Aorta (tissue), 5 donors: ENCODE measurements at regions of chrX and their contacts with region 1.

Region 1: DNA sequence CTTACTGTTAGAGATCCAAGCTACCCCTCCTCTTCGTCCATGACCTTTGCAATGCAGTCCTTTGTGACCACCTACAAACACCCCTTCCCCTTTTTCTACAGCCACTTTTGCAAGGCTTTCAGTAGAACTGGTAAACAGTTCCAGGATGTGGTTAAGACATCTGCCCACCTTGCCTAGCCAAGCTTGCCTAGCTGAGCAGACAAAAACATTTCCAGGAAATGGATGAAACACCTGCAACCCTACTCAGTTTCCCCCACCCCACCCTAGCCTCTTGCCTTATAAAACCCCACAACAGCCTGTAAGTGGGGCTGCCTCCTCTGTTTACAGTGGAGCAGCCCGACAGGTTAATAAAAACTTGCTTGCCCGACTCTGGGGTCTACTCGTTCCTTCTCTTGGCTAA is 133.8 kb downstream of the ZC4H2 start:
- DNase-seq: no peak
- ATAC-seq: no peak
- H3K4me3 ChIP-seq: no peak overlapping the region
- H3K27ac ChIP-seq: no peak overlapping the region
- H3K4me1 ChIP-seq: no peaks in the 10 kb centered on the region
- H3K27me3 ChIP-seq: no peaks in the 10 kb centered on the region

Region 2: DNA sequence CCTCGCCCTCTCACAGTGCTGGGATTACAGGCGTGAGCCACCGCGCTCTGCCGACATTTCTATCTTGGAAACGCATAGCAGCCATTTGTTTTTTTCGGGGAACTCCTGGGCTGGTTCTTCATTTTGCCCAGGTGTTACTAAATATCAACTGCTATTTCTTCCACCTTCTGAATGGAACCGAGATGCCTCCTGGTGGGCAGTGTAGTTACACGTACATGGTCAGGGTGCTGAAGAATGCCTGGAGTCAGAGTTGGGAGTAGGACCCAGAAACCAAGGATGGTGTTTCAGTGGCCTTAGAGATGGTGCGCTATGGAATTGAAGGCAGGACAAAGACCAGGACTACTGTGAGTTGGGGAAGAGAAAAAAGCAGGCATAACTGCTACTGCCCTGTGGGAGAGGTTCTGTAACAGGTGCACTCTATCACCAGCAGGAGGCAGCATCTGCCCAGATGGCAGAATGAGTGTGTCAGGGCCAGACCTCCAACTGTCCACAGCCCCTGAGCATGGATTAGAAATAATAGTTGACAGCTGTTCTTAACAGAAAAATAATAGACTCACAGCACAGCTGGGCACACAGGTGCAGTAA is 52.1 kb after region 1 on chrX:
- intact Hi-C with region 1: loop called in 1 of 2 experiments (anchors 10 kb)
- DNase-seq: no peak
- ATAC-seq: no peak
- H3K4me3 ChIP-seq: no peak overlapping the region
- H3K27ac ChIP-seq: no peak overlapping the region
- H3K4me1 ChIP-seq: no peaks in the 10 kb centered on the region
- H3K27me3 ChIP-seq: no peaks in the 10 kb centered on the region